CD8-positive, alpha-beta T cell (primary cell): ENCODE measurements at regions of chr22 and their contacts with region 1.

Region 1: GRCh38 chr22:40346178-40347118 is at the start of gene ADSL:
- DNase-seq: peak; percentile 60 to 91 (median 83)
- ATAC-seq: peak; percentile 76
- H3K4me3 ChIP-seq: peak within 1 kb of the TSS; percentile 73 to 90
- H3K4me3 Mint-ChIP-seq: peak within 1 kb of the TSS; percentile 97
- H3K27ac ChIP-seq: peak within 1 kb of the TSS; percentile 74 to 82
- H3K27ac Mint-ChIP-seq: peak within 1 kb of the TSS; percentile 99
- H3K4me1 ChIP-seq: peaks cover 45% of the 10 kb centered on the region
- H3K4me1 Mint-ChIP-seq: peaks cover 60% of the 10 kb centered on the region
- H3K27me3 ChIP-seq: no peaks in the 10 kb centered on the region
- H3K27me3 Mint-ChIP-seq: no peaks in the 10 kb centered on the region
- CTCF ChIP-seq: no peak
- total RNA-seq, gene ADSL: 61.8 to 68.7 TPM

Region 2: GRCh38 chr22:39490135-39490798 is 856.2 kb before region 1 on chr22:
- CTCF ChIA-PET with region 1: interaction called, 3 read pairs
- POLR2A ChIA-PET with region 1: no interaction called
- intact Hi-C with region 1: loop called in 1 of 2 experiments (anchors 10 kb)
- DNase-seq: peak; percentile 58 to 89 (median 76)
- ATAC-seq: peak; percentile 99
- H3K4me3 ChIP-seq: no peak overlapping the region
- H3K4me3 Mint-ChIP-seq: peak overlapping the region; percentile 69
- H3K27ac ChIP-seq: no peak overlapping the region
- H3K27ac Mint-ChIP-seq: peak overlapping the region; percentile 67
- H3K4me1 ChIP-seq: peaks cover 7% of the 10 kb centered on the region
- H3K4me1 Mint-ChIP-seq: peaks cover 12% of the 10 kb centered on the region
- H3K27me3 ChIP-seq: no peaks in the 10 kb centered on the region
- H3K27me3 Mint-ChIP-seq: no peaks in the 10 kb centered on the region
- CTCF ChIP-seq: no peak

Region 3: GRCh38 chr22:40024201-40025061 is 322.0 kb before region 1 on chr22:
- CTCF ChIA-PET with region 1: interaction called, 28 read pairs
- POLR2A ChIA-PET with region 1: no interaction called
- intact Hi-C with region 1: loop called in 1 of 2 experiments (anchors 5 kb)
- DNase-seq: peak; percentile 20 to 78 (median 64)
- ATAC-seq: peak; percentile 72
- H3K4me3 ChIP-seq: no peak overlapping the region
- H3K4me3 Mint-ChIP-seq: no peak overlapping the region
- H3K27ac ChIP-seq: no peak overlapping the region
- H3K27ac Mint-ChIP-seq: no peak overlapping the region
- H3K4me1 ChIP-seq: peaks cover 6% of the 10 kb centered on the region
- H3K4me1 Mint-ChIP-seq: peaks cover 5% of the 10 kb centered on the region
- H3K27me3 ChIP-seq: no peaks in the 10 kb centered on the region
- H3K27me3 Mint-ChIP-seq: no peaks in the 10 kb centered on the region
- CTCF ChIP-seq: peak; percentile 80

Region 4: DNA sequence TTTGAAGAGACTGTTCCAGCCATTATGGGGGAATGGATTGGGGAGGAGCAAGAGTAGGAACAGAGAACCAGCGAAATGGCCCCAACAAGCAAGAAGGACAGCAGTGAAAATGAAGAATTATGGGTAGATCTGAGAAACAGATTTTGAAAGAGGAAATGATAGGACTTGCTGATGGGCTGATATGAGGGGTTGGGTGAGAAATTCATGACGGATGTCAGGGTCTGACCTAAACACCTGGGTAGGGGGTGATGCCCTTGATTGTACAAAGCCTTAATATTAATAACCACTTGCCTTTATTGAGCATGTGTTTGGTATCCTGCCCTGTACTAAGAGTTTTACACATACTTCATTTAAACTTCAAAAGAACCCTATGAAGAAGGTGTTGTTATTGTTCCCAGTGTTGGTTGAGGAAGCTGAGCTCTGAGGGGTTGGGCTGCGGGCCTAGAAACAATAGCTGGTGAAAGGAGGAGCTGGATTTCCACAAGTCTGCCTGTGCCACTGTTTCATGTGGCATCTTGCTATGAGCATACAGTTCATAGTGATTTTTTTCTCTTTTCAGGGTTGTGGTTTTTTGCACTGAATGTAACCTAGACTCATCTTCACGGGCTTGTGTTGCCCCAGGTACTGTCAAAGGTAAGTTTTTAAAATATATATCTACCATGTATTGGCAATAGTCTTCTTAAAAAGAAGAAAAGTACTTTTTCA is 229.8 kb before region 1 on chr22:
- CTCF ChIA-PET with region 1: interaction called, 3 read pairs
- POLR2A ChIA-PET with region 1: no interaction called
- intact Hi-C with region 1: loop called in 1 of 2 experiments (anchors 5 kb)
- DNase-seq: peak; percentile 24 to 89 (median 68)
- ATAC-seq: peak; percentile 89
- H3K4me3 ChIP-seq: peak overlapping the region in 1 of 2 experiments; percentile 30
- H3K4me3 Mint-ChIP-seq: peak overlapping the region; percentile 52
- H3K27ac ChIP-seq: peak overlapping the region; percentile 29 to 51
- H3K27ac Mint-ChIP-seq: peak overlapping the region; percentile 85
- H3K4me1 ChIP-seq: peaks cover 74% of the 10 kb centered on the region
- H3K4me1 Mint-ChIP-seq: peaks cover 87% of the 10 kb centered on the region
- H3K27me3 ChIP-seq: no peaks in the 10 kb centered on the region
- H3K27me3 Mint-ChIP-seq: no peaks in the 10 kb centered on the region
- CTCF ChIP-seq: no peak

Region 5: DNA sequence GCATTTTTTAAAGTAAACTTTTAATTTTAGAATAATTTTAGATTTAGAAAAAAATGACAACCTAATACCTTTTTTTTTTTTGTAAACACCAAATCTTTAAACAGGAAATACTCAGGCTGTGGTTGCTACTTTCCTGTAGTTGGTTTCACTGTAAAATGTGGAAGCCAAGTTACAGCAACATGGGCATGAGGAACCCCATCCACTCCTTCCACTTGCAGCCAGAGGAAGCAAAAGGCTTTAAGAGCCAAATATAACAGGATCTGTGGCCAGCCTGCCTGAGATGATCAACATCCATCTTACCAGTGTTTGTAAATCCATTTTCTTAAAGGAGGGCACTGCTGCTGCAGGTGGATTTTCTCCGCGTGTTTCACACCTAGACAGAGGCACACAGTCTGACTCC is 102.6 kb before region 1 on chr22:
- CTCF ChIA-PET with region 1: interaction called, 13 read pairs
- POLR2A ChIA-PET with region 1: interaction called, 3 read pairs
- intact Hi-C with region 1: loop called in 1 of 2 experiments (anchors 2 kb)
- DNase-seq: peak in 3 of 9 experiments; percentile 22 to 68 (median 47)
- ATAC-seq: no peak
- H3K4me3 ChIP-seq: no peak overlapping the region
- H3K4me3 Mint-ChIP-seq: peak overlapping the region; percentile 38
- H3K27ac ChIP-seq: peak overlapping the region in 1 of 2 experiments; percentile 11
- H3K27ac Mint-ChIP-seq: peak overlapping the region; percentile 71
- H3K4me1 ChIP-seq: peaks cover 78% of the 10 kb centered on the region
- H3K4me1 Mint-ChIP-seq: peaks cover 80% of the 10 kb centered on the region
- H3K27me3 ChIP-seq: no peaks in the 10 kb centered on the region
- H3K27me3 Mint-ChIP-seq: no peaks in the 10 kb centered on the region
- CTCF ChIP-seq: no peak

Region 6: GRCh38 chr22:40310081-40310767 is 36.2 kb before region 1 on chr22:
- CTCF ChIA-PET with region 1: interaction called, 27 read pairs
- POLR2A ChIA-PET with region 1: interaction called, 3 read pairs
- intact Hi-C with region 1: loop called (anchors 1 to 5 kb)
- DNase-seq: no peak
- ATAC-seq: no peak
- H3K4me3 ChIP-seq: no peak overlapping the region
- H3K4me3 Mint-ChIP-seq: no peak overlapping the region
- H3K27ac ChIP-seq: no peak overlapping the region
- H3K27ac Mint-ChIP-seq: peak overlapping the region; percentile 53
- H3K4me1 ChIP-seq: peaks cover 28% of the 10 kb centered on the region
- H3K4me1 Mint-ChIP-seq: peaks cover 46% of the 10 kb centered on the region
- H3K27me3 ChIP-seq: no peaks in the 10 kb centered on the region
- H3K27me3 Mint-ChIP-seq: no peaks in the 10 kb centered on the region
- CTCF ChIP-seq: no peak

Region 7: DNA sequence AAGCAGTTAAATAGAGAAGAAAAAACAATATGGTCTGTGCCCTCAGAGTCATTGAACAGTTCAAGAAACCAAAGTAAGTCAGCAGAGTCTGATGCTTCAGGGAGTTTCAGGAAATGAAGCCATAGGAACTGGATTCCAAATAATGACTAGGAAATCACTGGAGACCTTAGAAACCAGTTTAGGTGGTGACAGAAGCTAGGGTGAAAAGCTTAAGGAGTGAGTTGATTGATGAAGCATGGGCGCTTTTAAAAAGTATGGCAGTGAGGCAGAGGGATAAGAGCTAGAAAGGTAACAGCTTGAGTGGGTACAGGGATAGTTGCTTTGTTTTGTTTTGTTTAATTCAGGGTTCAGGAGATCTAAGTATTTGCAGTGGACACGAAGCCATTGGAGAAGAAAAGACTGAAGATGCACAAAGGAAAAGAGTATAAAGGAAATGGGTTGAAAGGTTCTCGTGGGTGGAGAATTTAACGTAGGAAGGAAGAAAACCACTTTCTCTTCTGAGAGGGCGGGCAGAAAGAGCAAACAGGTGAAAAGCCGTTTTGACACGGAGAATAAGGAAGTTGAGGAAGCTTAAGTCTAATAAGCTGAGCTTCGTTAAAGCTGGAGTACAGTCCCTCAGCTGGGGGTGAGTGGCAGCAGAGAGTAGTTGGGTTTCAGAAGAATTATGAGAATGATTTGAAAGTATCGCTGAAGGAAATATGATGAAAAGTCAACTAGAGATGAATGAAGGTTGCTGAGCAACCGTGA is 38.8 kb after region 1 on chr22:
- CTCF ChIA-PET with region 1: no interaction called
- POLR2A ChIA-PET with region 1: no interaction called
- intact Hi-C with region 1: no loop called
- DNase-seq: peak in 5 of 9 experiments; percentile 29 to 78 (median 56)
- ATAC-seq: peak; percentile 95
- H3K4me3 ChIP-seq: peak overlapping the region; percentile 28 to 38
- H3K4me3 Mint-ChIP-seq: peak overlapping the region; percentile 85
- H3K27ac ChIP-seq: peak overlapping the region; percentile 52 to 79
- H3K27ac Mint-ChIP-seq: peak overlapping the region; percentile 96
- H3K4me1 ChIP-seq: peaks cover 51% of the 10 kb centered on the region
- H3K4me1 Mint-ChIP-seq: peaks cover 63% of the 10 kb centered on the region
- H3K27me3 ChIP-seq: no peaks in the 10 kb centered on the region
- H3K27me3 Mint-ChIP-seq: no peaks in the 10 kb centered on the region
- CTCF ChIP-seq: no peak

Region 8: DNA sequence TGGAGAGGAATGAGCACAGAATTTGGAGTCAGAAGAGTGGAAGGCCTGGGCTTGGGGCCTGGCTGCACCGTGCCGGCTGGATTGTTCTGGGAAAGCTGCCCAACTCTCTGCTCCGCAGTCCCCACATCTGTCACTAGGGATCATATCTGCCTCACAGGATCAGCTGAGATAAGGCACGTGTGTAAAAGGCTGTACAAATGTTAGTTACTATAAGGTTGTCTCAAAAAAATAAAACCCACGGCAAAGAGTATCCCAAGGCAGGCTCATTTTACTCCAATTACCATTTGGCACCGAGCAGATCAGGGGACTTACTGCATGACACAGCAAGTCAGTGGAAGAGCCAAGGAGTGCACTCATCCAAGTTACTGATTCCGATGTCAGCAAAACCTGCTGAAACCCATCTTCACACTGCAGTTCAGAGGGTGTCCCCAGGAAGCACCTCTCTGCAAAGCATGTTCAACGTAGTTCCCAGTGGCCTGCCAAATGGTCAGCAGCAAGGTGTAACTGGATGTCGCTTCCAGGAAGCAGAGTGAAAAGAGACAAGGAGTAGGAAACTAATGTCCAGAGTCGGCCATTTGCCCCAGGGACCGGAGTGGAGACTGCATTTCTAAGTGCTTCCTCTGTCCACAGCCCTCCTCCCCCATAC is 308.2 kb after region 1 on chr22:
- CTCF ChIA-PET with region 1: no interaction called
- POLR2A ChIA-PET with region 1: no interaction called
- intact Hi-C with region 1: no loop called
- DNase-seq: no peak
- ATAC-seq: no peak
- H3K4me3 ChIP-seq: no peak overlapping the region
- H3K4me3 Mint-ChIP-seq: no peak overlapping the region
- H3K27ac ChIP-seq: no peak overlapping the region
- H3K27ac Mint-ChIP-seq: peak overlapping the region; percentile 3
- H3K4me1 ChIP-seq: no peaks in the 10 kb centered on the region
- H3K4me1 Mint-ChIP-seq: peaks cover 2% of the 10 kb centered on the region
- H3K27me3 ChIP-seq: no peaks in the 10 kb centered on the region
- H3K27me3 Mint-ChIP-seq: no peaks in the 10 kb centered on the region
- CTCF ChIP-seq: no peak